WTC11 (cell line): ENCODE measurements at regions of chr10 and their contacts with region 1.

Region 1: GRCh38 chr10:69663369-69663947 is 33.4 kb downstream of the FAM241B start:
- DNase-seq: peak; percentile 63
- ATAC-seq: peak; percentile 88
- H3K4me3 Mint-ChIP-seq: no peak overlapping the region
- H3K27ac Mint-ChIP-seq: no peak overlapping the region
- H3K4me1 Mint-ChIP-seq: peaks cover 27% of the 10 kb centered on the region
- H3K27me3 Mint-ChIP-seq: peaks cover 9% of the 10 kb centered on the region
- CTCF ChIP-seq: no peak

Region 2: DNA sequence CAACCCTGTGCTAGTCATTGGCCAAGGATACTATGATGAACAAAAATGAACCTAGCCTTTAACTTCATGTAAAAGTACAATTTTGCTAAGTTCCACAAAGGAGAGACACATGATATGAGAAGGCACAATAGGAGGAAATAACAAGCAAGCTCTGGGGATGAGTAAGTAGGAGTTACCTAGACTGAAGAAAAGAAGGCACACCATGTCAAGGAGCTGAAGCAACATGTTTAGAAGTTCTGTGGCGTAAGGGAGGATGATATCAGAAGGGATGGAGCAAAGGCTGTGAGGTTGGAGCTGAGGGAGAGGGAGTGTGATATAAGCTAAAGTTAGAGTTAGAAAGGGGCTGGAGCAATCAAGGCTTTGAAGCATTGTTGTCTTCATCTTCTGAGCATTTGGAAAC is 649.3 kb before region 1 on chr10:
- CTCF ChIA-PET with region 1: no interaction called
- POLR2A ChIA-PET with region 1: no interaction called
- DNase-seq: no peak
- ATAC-seq: no peak
- H3K4me3 Mint-ChIP-seq: no peak overlapping the region
- H3K27ac Mint-ChIP-seq: no peak overlapping the region
- H3K4me1 Mint-ChIP-seq: no peaks in the 10 kb centered on the region
- H3K27me3 Mint-ChIP-seq: no peaks in the 10 kb centered on the region
- CTCF ChIP-seq: no peak

Region 3: GRCh38 chr10:69262292-69262751 is 401.1 kb before region 1 on chr10:
- CTCF ChIA-PET with region 1: no interaction called
- POLR2A ChIA-PET with region 1: no interaction called
- DNase-seq: no peak
- ATAC-seq: no peak
- H3K4me3 Mint-ChIP-seq: no peak overlapping the region
- H3K27ac Mint-ChIP-seq: no peak overlapping the region
- H3K4me1 Mint-ChIP-seq: peaks cover 4% of the 10 kb centered on the region
- H3K27me3 Mint-ChIP-seq: no peaks in the 10 kb centered on the region
- CTCF ChIP-seq: no peak

Region 4: GRCh38 chr10:69620625-69621024 is 42.8 kb before region 1 on chr10:
- CTCF ChIA-PET with region 1: no interaction called
- POLR2A ChIA-PET with region 1: no interaction called
- DNase-seq: no peak
- ATAC-seq: 0 out of 2 replicates have a peak, but pooled peaks have one; percentile 24
- H3K4me3 Mint-ChIP-seq: no peak overlapping the region
- H3K27ac Mint-ChIP-seq: no peak overlapping the region
- H3K4me1 Mint-ChIP-seq: peaks cover 5% of the 10 kb centered on the region; the same call in 1 of the 2 replicates
- H3K27me3 Mint-ChIP-seq: peaks cover 10% of the 10 kb centered on the region
- CTCF ChIP-seq: no peak

Region 5: DNA sequence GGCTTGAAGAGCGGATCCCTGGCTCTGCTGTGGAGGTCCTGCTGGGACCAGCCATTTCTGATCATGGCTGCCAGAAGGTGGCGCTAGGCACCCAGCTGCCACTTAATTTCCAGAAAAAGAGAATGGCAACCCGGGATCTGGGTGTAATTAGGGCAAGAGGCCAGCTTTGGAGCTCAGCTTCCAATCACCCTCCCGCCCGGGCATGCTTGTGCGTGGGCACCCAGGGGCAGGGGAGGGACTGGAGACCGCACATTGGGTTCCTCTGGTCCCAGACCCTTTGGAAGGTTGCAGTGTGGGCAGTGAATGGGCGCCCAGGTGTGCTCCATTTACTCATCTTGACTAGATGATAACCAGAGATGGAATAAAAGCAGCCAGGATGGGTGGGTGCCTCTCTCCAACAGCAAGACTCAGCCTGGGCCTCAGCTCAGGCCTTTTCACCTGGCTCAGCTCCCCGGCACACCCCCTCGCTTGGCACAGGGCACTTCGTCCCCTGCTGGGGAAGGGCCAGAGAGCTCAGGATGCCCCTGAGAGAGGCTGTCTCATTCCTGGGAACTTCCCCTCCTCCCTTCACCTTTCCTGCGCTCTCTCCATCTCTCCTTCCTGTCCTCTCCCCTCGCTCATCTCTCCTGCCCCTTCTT is 18.7 kb before region 1 on chr10:
- CTCF ChIA-PET with region 1: interaction called, 256 read pairs
- POLR2A ChIA-PET with region 1: no interaction called
- DNase-seq: peak; percentile 77
- ATAC-seq: peak; percentile 75
- H3K4me3 Mint-ChIP-seq: no peak overlapping the region
- H3K27ac Mint-ChIP-seq: no peak overlapping the region
- H3K4me1 Mint-ChIP-seq: peaks cover 30% of the 10 kb centered on the region
- H3K27me3 Mint-ChIP-seq: no peaks in the 10 kb centered on the region; the same call in 1 of the 2 replicates
- CTCF ChIP-seq: peak; percentile 72

Region 6: GRCh38 chr10:69684020-69684980 is 20.8 kb after region 1 on chr10:
- CTCF ChIA-PET with region 1: interaction called, 22 read pairs
- POLR2A ChIA-PET with region 1: no interaction called
- DNase-seq: no peak
- ATAC-seq: peak; percentile 62
- H3K4me3 Mint-ChIP-seq: no peak overlapping the region
- H3K27ac Mint-ChIP-seq: no peak overlapping the region
- H3K4me1 Mint-ChIP-seq: peaks cover 21% of the 10 kb centered on the region
- H3K27me3 Mint-ChIP-seq: peaks cover 6% of the 10 kb centered on the region
- CTCF ChIP-seq: no peak

Region 7: DNA sequence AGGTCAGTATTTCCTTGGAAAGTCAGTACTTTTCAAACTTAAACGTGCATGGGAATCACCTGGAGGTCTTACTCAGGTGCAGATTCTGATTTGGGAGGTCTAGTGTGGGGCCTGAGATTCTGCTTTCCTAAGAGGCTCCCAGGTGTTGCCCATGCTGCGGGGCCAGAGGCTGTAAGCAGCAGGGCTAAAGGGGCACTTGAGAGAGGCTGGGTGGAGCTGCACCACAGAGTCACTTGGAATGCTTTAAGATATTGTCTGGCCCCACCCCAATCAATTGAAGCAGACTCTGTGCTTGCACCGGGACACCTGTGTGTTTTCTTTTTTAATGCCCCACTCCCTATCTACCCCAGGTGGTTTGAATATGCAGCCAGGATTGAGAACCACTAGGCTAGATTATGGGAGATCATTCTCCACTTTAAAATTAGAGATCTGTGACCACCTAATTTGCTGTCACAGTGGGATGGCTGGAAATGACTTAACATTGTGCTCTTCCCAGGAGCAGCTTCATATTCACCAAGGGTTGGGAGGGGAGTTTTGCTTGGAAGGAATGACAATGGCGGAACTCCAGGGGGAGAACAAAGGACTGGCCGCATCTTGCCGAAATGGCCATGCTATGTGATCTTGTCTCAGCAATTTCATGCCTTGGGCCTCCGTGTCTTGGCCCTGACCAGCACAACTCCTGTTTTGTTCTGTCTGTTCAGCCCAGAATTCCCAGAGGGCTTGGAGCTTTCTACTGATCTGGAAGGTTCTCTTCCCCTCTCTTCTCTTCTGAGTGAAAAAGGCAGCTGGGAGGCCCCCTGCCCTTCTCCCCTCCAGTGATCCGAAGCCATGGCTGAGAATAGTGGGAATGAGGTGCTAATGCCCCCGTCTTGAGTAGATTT is 46.8 kb after region 1 on chr10:
- CTCF ChIA-PET with region 1: interaction called, 67 read pairs
- POLR2A ChIA-PET with region 1: no interaction called
- DNase-seq: no peak
- ATAC-seq: peak; percentile 68
- H3K4me3 Mint-ChIP-seq: no peak overlapping the region
- H3K27ac Mint-ChIP-seq: no peak overlapping the region
- H3K4me1 Mint-ChIP-seq: peaks cover 20% of the 10 kb centered on the region
- H3K27me3 Mint-ChIP-seq: peaks cover 17% of the 10 kb centered on the region
- CTCF ChIP-seq: no peak

Region 8: GRCh38 chr10:69728335-69728870 is 64.9 kb after region 1 on chr10:
- CTCF ChIA-PET with region 1: interaction called, 16 read pairs
- POLR2A ChIA-PET with region 1: no interaction called
- DNase-seq: no peak
- ATAC-seq: peak; percentile 74
- H3K4me3 Mint-ChIP-seq: no peak overlapping the region
- H3K27ac Mint-ChIP-seq: peak overlapping the region; percentile 38; the same call in 1 of the 2 replicates
- H3K4me1 Mint-ChIP-seq: peaks cover 26% of the 10 kb centered on the region
- H3K27me3 Mint-ChIP-seq: peaks cover 5% of the 10 kb centered on the region
- CTCF ChIP-seq: no peak